Heart left ventricle (tissue), 16 donors: ENCODE measurements at regions of chr10 and their contacts with region 1.

Region 1: DNA sequence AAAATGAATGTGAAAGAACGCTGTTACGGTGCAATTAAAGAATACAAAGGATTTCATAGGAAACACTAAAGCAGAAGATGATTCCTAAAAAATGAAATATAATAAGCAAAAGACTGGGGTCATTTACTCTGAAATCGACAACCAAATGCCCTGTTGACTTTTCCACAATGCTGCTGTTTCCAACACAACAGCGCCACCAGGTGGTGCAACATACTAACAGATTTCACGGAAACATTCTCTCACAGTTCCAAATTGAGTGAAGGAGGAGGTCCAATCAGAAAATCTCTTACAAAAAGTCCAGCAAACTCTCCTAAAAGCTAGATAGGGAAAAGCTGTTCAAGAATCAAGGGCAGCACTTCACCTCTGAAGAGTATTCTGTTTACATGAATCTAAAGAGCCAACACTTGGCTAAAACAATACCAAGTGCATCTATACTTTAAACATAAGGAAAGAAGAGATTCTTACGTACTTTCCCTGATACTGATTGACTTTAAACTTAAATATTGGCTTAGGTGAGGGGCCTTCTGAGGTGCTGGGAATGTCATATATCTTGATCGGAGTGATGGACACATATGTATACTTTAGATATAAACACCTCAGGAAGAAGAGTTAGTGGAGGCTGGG is 55.9 kb downstream of the UPF2 start:
- DNase-seq: peak; percentile 59 to 84 (median 69)
- ATAC-seq: peak in 3 of 4 donors; percentile 29 to 54 (median 42)
- H3K4me3 ChIP-seq: no peak overlapping the region
- H3K27ac ChIP-seq: no peak overlapping the region
- H3K4me1 ChIP-seq: peaks cover 0 to 5% (median 0%) of the 10 kb centered on the region in 12 donors
- H3K27me3 ChIP-seq: no peaks in the 10 kb centered on the region
- CTCF ChIP-seq: peak; percentile 68 to 92 (median 84)
- POLR2A ChIP-seq: no peak

Region 2: DNA sequence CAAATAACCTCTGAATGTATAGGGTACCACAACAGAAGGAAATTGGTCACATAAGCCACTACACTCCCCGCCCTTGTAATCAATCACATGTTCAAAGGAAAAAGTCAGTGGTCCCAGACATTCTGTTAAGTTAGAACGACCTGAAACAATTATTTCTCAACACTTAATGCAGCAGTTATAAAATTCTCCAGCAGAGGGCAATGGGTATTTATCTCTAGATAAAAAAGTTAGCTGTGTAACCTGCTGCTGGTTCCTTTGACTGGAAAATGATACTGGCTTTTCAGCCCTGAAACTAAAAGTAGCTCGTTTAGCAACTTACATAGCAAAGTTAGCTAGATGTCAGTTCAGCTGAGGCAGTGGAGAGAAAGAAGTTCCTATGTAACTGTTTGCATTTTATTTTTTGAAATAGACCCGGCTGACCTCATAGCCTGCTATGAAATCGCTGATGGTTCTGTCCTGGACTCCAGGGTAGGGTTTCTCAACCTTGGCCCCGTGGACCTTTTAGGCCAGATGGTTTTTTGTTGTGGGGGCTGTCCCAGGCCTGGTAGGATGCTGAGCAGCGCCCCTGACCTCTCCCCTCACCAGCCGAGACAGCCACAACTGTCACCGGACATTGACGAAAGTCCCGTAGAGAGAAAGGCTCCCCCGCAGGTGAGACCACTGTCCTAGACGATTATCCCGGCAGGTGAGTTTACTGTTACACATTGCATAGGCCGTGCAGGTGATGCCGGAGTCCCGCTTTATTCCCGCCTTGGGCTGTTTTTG is 203.7 kb before region 1 on chr10:
- intact Hi-C with region 1: loop called in 7 of 10 experiments (anchors 2 to 5 kb)
- DNase-seq: no peak
- ATAC-seq: no peak
- H3K4me3 ChIP-seq: no peak overlapping the region
- H3K27ac ChIP-seq: no peak overlapping the region
- H3K4me1 ChIP-seq: no peaks in the 10 kb centered on the region
- H3K27me3 ChIP-seq: peaks cover 0 to 4% (median 0%) of the 10 kb centered on the region in 9 donors
- CTCF ChIP-seq: peak; percentile 49 to 79 (median 65)
- POLR2A ChIP-seq: no peak

Region 3: DNA sequence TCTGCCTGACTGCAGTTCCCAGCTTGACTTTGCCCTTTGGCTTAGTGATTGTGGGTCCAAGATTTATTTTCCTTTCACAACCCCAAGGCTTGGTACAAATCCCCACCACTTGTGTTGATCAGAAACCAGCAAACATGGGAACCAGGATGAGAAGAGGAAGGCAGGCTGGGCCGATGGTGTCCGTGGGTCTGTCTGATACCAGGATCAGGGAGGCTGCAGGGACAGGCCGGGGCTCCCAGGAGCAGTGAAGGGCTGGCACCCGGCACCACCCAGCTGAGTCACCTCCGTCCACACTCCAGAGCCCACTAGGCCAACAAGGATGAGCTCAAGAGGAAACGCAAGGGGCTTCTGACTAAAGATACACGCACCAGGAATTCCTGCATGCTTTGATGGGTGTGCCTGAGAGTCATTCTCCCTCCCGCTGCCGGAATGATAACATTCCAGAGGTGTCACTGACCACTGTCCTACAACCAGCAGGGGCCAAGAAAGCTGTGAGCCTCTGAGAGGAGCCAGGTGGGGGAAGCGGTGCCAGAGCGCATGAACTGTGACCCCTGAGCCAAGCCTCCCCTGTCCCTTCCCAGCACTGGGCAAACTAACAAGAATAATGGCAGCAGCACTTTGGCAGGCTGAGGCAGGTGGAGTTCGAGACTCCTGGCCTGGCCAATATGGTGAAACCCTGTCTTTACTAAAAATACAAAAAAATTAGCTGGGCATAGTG is 192.8 kb before region 1 on chr10:
- intact Hi-C with region 1: loop called in 4 of 10 experiments (anchors 5 kb)
- DNase-seq: no peak
- ATAC-seq: no peak
- H3K4me3 ChIP-seq: no peak overlapping the region
- H3K27ac ChIP-seq: no peak overlapping the region
- H3K4me1 ChIP-seq: peaks cover 0 to 5% (median 0%) of the 10 kb centered on the region in 12 donors
- H3K27me3 ChIP-seq: peaks cover 0 to 12% (median 0%) of the 10 kb centered on the region in 9 donors
- CTCF ChIP-seq: no peak
- POLR2A ChIP-seq: no peak

Region 4: DNA sequence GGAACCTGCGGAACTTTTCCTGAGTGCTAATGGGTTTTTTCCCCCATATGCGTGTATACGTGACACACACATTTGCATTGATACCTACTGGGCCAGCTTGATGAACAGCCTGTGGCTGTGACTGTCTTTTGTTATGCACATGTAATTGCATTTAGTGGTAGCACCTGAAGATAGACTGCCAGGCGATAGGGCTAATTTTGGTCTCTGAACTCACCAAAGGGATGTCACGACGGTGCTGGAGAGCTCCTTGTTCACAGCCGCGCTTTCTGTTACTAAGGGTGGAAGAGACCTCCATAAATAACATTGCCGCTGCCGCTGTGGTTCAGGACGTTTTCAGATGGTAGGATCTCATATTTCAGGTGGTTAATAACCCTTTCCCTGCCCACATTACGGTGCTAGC is 495.9 kb after region 1 on chr10:
- intact Hi-C with region 1: no loop called
- DNase-seq: no peak
- ATAC-seq: no peak
- H3K4me3 ChIP-seq: no peak overlapping the region
- H3K27ac ChIP-seq: no peak overlapping the region
- H3K4me1 ChIP-seq: peaks cover 0 to 16% (median 10%) of the 10 kb centered on the region in 12 donors
- H3K27me3 ChIP-seq: no peaks in the 10 kb centered on the region
- CTCF ChIP-seq: no peak
- POLR2A ChIP-seq: no peak